Activated CD4-positive, alpha-beta T cell treated with anti-CD3 and anti-CD28 coated beads for 36 hours (primary cell): ENCODE measurements at regions of chr18 and their contacts with region 1.

Region 1: DNA sequence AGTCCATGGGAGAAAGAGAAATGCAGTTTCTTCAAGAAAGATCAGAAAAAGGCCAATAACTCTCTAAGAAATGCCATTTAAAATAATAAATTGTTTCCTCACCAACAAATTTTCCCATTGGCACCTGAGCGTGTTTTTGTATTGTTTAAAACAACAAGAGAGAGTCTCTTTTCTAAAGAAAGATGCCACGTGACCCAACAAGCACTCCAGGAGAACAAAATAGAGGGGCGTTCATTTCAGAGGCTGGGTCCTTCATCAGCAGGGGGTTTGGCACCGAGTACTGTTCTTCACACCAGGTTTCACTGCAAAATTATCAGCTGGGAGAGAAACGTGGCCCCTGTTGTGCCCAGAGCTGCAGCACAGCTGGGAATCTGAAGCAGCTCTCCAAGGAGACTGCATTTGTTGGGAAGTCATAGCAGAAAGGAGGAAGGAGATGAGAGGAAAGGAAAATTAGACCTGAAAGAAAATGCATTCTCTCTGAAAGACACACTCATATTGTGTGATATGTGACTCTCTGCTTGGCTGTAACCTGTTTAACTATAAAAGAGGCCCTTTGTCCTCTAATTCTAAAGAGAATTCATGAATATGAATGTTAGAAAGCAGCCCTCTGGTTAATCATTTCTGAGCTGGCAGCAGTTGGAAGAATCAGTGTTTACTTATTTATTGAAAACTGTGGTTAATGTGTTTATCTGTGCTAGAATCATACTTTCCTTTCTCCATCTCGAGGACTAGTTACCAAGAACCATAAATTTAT is 205.3 kb upstream of the CDH20 start:
- DNase-seq: no peak
- ATAC-seq: no peak
- H3K4me3 Mint-ChIP-seq: no peak overlapping the region
- H3K27ac Mint-ChIP-seq: no peak overlapping the region
- H3K4me1 Mint-ChIP-seq: no peaks in the 10 kb centered on the region
- H3K27me3 Mint-ChIP-seq: no peaks in the 10 kb centered on the region

Region 2: DNA sequence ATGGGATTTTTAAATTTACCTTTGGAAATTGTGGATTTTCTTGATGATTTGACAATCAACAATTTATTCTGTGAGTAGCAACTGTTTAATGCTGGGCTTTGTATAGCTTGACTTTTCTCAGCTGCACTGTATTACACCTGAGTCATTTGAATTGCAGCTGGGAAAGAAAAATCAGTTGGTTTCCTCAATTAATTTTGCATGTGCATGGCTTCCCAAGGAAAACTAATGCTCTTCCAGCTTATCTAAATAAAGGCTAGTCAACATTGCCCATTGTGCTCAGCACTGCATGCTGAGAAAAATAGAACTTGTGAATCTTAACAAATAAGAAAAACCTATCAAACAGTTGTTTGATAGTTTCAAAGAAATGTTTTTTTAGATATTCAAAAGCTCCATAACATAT is 63.0 kb before region 1 on chr18:
- CTCF ChIA-PET with region 1: no interaction called
- POLR2A ChIA-PET with region 1: no interaction called
- intact Hi-C with region 1: loop called in 1 of 2 experiments (anchors 10 kb)
- DNase-seq: no peak
- ATAC-seq: no peak
- H3K4me3 Mint-ChIP-seq: no peak overlapping the region
- H3K27ac Mint-ChIP-seq: no peak overlapping the region
- H3K4me1 Mint-ChIP-seq: no peaks in the 10 kb centered on the region
- H3K27me3 Mint-ChIP-seq: no peaks in the 10 kb centered on the region

Region 3: GRCh38 chr18:61169386-61169785 is 41.5 kb after region 1 on chr18:
- CTCF ChIA-PET with region 1: no interaction called
- POLR2A ChIA-PET with region 1: no interaction called
- intact Hi-C with region 1: no loop called
- DNase-seq: no peak
- ATAC-seq: no peak
- H3K4me3 Mint-ChIP-seq: no peak overlapping the region
- H3K27ac Mint-ChIP-seq: no peak overlapping the region
- H3K4me1 Mint-ChIP-seq: no peaks in the 10 kb centered on the region
- H3K27me3 Mint-ChIP-seq: no peaks in the 10 kb centered on the region